H1 (cell line): ENCODE measurements at regions of chr14 and their contacts with region 1.

Region 1: GRCh38 chr14:49879683-49880204 is 13.1 kb upstream of the ARF6 start:
- DNase-seq: peak; percentile 61 to 67
- H3K4me3 ChIP-seq: no peak overlapping the region
- H3K27ac ChIP-seq: no peak overlapping the region
- H3K4me1 ChIP-seq: peaks cover 2 to 8% (median 7%) of the 10 kb centered on the region in 4 experiments; a peak in 5 of 7 replicates
- H3K27me3 ChIP-seq: no peaks in the 10 kb centered on the region
- CTCF ChIP-seq: peak; percentile 63 to 93 (median 86)
- EP300 ChIP-seq: no peak
- POLR2A ChIP-seq: no peak
- RAD21 ChIP-seq: peak; percentile 63 to 80

Region 2: GRCh38 chr14:49670475-49670874 is 209.3 kb before region 1 on chr14:
- CTCF ChIA-PET with region 1: no interaction called
- POLR2A ChIA-PET with region 1: no interaction called
- DNase-seq: no peak
- H3K4me3 ChIP-seq: no peak overlapping the region
- H3K27ac ChIP-seq: no peak overlapping the region
- H3K4me1 ChIP-seq: no peaks in the 10 kb centered on the region
- H3K27me3 ChIP-seq: no peaks in the 10 kb centered on the region
- CTCF ChIP-seq: no peak
- EP300 ChIP-seq: no peak
- POLR2A ChIP-seq: no peak
- RAD21 ChIP-seq: no peak

Region 3: GRCh38 chr14:49808780-49809179 is 71.0 kb before region 1 on chr14:
- CTCF ChIA-PET with region 1: no interaction called
- POLR2A ChIA-PET with region 1: no interaction called
- DNase-seq: no peak
- H3K4me3 ChIP-seq: peak overlapping the region in 1 of 4 experiments; percentile 18; a peak in 1 of 8 replicates
- H3K27ac ChIP-seq: no peak overlapping the region
- H3K4me1 ChIP-seq: peaks cover 0 to 6% (median 2%) of the 10 kb centered on the region in 4 experiments; a peak in 4 of 7 replicates
- H3K27me3 ChIP-seq: no peaks in the 10 kb centered on the region
- CTCF ChIP-seq: no peak
- EP300 ChIP-seq: no peak
- POLR2A ChIP-seq: no peak
- RAD21 ChIP-seq: no peak

Region 4: DNA sequence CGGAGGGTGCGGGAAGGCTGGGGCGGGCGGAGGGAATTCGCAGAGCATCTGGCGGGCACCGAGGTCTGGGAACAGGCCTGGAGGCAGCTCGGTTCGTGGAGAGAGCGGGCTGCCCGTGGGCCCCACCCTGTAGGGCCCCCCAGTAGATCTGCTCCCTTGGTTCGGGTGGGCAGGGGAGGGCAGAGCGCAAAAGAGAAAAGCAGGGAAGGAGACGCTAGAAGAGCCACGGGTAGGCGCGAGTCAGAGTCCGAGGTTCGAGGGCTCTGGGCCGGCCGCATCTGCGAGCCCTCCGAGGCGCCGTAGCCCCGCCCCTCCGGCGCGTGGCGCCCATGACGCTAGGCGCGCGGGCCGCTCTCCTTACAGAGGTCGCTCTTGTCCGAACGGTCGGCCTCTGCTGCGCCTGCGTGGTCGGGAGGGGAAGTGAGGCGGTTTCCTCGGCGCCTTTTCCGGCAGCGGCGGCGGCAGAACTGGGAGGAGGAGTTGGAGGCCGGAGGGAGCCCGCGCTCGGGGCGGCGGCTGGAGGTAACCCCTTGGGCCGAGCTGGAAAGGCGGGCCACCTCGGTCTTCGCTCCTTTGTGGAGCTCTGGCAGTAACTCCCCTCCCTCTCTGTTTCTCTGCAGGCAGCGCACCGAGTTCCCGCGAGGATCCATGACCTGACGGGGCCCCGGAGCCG is 13.0 kb after region 1 on chr14 and contains the start of gene ARF6:
- CTCF ChIA-PET with region 1: interaction called, 6 read pairs
- POLR2A ChIA-PET with region 1: interaction called, 10 read pairs
- DNase-seq: peak; percentile 83 to 96
- H3K4me3 ChIP-seq: peak within 1 kb of the TSS; percentile 82 to 93 (median 84)
- H3K27ac ChIP-seq: peak within 1 kb of the TSS; percentile 88
- H3K4me1 ChIP-seq: no peaks in the 10 kb centered on the region; a peak in 2 of 7 replicates
- H3K27me3 ChIP-seq: no peaks in the 10 kb centered on the region
- CTCF ChIP-seq: no peak; a peak in 1 of 4 replicates
- EP300 ChIP-seq: peak in 1 of 2 experiments; percentile 48; a peak in 1 of 3 replicates
- POLR2A ChIP-seq: peak; percentile 68 to 99
- RAD21 ChIP-seq: peak; percentile 0 to 30; a peak in 1 of 4 replicates
- total RNA-seq, gene ARF6: 56.7 and 56.9 TPM in 2 replicates